ENCODE measurements at regions of chr12 and their contacts with region 1.

Region 1: GRCh38 chr12:110100315-110100970 is 23.7 kb upstream of the IFT81 start:
- DNase-seq: peak; percentile 64
- ATAC-seq: peak; percentile 81

Region 2: DNA sequence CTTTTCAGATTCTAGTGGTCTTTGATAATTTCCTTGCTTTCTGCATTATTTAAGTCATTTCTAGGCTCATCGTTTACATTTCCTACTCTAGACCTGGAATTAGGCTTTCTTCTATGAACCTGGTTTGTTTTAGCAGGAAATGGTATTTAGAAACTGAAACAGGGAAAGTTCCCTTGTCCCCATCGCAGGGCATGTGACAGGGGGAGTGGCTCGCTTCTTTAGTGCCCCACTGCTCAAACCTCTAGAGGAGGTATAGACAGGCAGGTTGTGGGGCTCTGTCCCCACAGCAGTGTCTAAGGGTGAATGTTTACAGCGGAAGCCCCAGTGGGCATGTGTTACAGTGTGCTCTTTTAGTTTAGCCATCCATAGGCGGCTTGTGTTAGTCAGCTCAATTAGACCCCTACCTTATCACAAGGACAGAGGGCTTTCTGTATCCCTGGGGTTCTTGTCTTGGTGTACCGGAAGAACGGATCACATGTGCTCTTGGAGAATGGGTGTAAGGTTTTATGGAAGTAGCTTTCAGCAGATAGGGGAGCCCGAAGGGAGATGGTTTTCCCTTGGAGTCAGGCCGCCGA is 48.7 kb after region 1 on chr12:
- intact Hi-C with region 1: no loop called
- DNase-seq: no peak
- ATAC-seq: no peak

Region 3: GRCh38 chr12:110431957-110432587 is 331.6 kb after region 1 on chr12:
- intact Hi-C with region 1: loop called (anchors 5 kb)
- DNase-seq: no peak
- ATAC-seq: no peak

Measured in Right ventricle myocardium superior (tissue), 1 donor.